ENCODE measurements at regions of chr16 and their contacts with region 1.

Region 1: DNA sequence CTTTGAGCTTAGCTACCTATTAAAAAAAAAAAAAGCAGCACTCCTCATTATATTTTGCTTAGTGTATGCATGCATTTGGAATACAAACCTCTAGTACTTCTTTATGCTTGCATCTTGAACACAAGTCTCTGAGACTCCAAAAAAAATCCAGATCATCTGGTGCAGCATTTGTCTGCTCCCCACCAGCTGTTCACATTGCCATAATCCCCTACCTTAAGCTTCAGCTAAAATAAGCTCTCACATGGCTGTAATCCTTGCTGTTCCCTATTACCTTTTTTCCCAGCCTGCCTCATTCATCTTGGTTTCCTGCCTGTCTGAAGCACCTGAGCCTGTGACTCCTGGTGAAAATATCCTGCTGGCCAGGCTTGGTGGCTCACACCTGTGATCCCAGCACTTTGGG is 7.5 kb upstream of the NFATC2IP start:
- DNase-seq: no peak
- ATAC-seq: no peak
- H3K4me3 ChIP-seq: no peak overlapping the region
- H3K27ac ChIP-seq: no peak overlapping the region
- H3K4me1 ChIP-seq: peaks cover 0 to 14% (median 6%) of the 10 kb centered on the region in 12 donors
- H3K27me3 ChIP-seq: no peaks in the 10 kb centered on the region
- CTCF ChIP-seq: no peak
- POLR2A ChIP-seq: no peak

Region 2: GRCh38 chr16:28838558-28838918 is 104.7 kb before region 1 on chr16:
- intact Hi-C with region 1: no loop called
- DNase-seq: no peak
- ATAC-seq: no peak
- H3K4me3 ChIP-seq: no peak overlapping the region
- H3K27ac ChIP-seq: no peak overlapping the region
- H3K4me1 ChIP-seq: no peaks in the 10 kb centered on the region
- H3K27me3 ChIP-seq: no peaks in the 10 kb centered on the region
- CTCF ChIP-seq: no peak
- POLR2A ChIP-seq: no peak

Region 3: GRCh38 chr16:28863929-28864793 is 79.1 kb before region 1 on chr16:
- intact Hi-C with region 1: loop called in 2 of 10 experiments (anchors 5 kb)
- DNase-seq: peak in 2 of 5 donors; percentile 35 to 39
- ATAC-seq: peak in 2 of 4 donors; percentile 13 to 27
- H3K4me3 ChIP-seq: peak overlapping the region; percentile 68 to 100 (median 92)
- H3K27ac ChIP-seq: peak overlapping the region; percentile 91 to 99 (median 98)
- H3K4me1 ChIP-seq: peaks cover 0 to 32% (median 19%) of the 10 kb centered on the region in 12 donors
- H3K27me3 ChIP-seq: no peaks in the 10 kb centered on the region
- CTCF ChIP-seq: no peak
- POLR2A ChIP-seq: no peak

Region 4: DNA sequence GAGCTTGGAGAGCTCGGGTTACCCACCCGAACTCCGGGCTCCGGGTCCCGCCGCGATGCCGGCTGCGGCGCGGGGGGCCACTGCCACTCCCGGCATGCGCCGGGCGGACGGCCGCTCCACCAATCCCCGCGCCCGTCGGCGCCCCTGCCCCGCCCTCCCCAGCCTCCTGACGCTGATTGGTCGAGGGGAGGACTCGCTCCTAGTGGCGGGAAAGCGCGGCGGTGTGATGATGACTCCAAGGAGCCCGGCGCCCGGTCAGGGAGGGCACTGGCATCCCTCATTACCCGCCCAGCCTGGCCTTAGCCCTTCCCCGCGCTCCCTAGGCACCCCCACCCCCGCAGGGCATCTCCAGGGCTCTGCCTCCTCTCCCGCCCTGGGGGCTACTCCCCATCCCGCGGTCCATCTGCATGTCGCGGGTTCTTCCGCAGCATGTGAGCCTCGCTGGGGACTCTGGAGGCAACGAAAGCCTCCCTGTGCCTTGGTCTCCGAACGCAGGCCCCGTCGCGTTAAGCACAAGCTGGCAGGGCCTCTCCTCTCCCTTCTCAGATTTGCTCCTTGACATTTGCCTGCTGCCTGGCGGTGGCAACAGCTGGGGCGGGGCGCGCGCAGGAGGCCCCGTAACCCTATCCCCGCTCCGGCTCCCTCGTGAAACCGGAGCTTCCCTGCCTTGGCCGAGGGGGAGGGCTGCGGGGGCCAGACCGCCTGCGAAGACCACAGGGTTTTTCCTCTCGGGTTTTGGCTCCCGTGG is 63.3 kb before region 1 on chr16:
- intact Hi-C with region 1: loop called in 5 of 10 experiments (anchors 2 to 5 kb)
- DNase-seq: peak; percentile 88 to 93 (median 89)
- ATAC-seq: peak; percentile 61 to 96 (median 94)
- H3K4me3 ChIP-seq: peak overlapping the region; percentile 29 to 92 (median 69)
- H3K27ac ChIP-seq: peak overlapping the region in 4 of 12 donors; percentile 24 to 56 (median 34)
- H3K4me1 ChIP-seq: peaks cover 4 to 16% (median 11%) of the 10 kb centered on the region in 12 donors
- H3K27me3 ChIP-seq: peaks cover 0 to 10% (median 0%) of the 10 kb centered on the region in 9 donors
- CTCF ChIP-seq: peak in 5 of 12 donors; percentile 7 to 40 (median 16)
- POLR2A ChIP-seq: peak in 1 of 2 donors; percentile 43

Region 5: DNA sequence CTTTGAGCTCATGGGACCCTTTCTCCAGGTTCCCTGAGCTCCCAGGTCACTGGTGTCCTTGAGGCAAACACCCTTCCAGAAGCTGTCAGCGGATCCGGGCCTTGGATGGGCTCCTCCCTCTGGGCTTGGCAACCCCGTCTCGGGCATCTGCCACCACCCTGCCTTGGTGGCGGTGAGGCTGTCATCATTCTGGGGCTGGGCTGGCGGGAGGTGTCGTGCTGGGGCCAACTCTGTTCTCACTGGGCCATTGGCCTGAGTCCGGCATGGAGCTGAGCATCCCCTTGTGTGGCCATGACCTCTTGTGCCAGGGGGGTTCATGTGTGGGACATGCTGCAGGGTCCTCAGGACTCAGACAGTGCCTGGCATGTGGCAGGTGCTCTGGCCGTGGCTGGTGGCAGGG is 239.2 kb after region 1 on chr16:
- intact Hi-C with region 1: no loop called
- DNase-seq: peak; percentile 46 to 90 (median 81)
- ATAC-seq: peak in 3 of 4 donors; percentile 25 to 56 (median 30)
- H3K4me3 ChIP-seq: no peak overlapping the region
- H3K27ac ChIP-seq: peak overlapping the region in 10 of 12 donors; percentile 61 to 90 (median 74)
- H3K4me1 ChIP-seq: peaks cover 0 to 65% (median 33%) of the 10 kb centered on the region in 12 donors
- H3K27me3 ChIP-seq: no peaks in the 10 kb centered on the region
- CTCF ChIP-seq: no peak
- POLR2A ChIP-seq: no peak

Measured in heart left ventricle (tissue), 16 donors.